BJ (cell line): ENCODE measurements at regions of chr21 and their contacts with region 1.

Region 1: DNA sequence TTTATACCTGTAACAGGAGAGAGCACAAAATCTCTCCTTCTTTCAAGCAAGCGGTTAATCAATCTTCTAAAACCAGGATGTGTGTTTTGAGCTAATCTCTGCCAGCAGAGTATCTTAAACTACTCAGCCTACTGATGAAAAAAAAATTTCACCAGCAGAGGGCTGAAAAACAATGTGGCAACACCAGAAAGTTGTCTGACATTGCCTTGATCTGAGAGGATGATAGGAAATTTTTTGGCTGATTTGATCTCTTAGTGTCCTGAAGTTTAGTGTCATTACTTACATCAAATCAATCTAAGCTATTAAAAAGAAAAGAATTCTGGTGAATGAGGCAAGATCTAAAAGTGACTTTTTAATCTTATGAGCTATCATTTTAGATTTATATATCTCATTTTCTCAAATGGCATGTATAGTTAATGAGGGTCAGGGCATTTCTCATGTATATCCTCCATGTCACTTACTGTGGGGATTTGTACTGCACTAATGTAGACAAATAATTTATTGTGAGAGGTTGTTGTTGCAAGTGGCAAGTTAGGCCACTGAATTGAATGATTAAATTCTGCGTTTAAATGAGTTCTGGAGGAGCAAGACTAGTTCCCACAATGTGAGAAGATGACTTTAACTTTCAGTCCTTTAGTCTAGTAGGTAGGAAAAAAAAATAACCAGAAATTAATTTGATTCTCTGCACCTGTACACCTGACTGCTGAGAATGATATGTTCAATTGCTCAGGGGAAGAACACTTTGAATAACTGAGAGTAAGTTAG is 10.8 kb downstream of the ADAMTS1 start:
- DNase-seq: no peak
- H3K4me3 ChIP-seq: no peak overlapping the region
- H3K27me3 ChIP-seq: no peaks in the 10 kb centered on the region
- CTCF ChIP-seq: peak; percentile 47

Region 2: DNA sequence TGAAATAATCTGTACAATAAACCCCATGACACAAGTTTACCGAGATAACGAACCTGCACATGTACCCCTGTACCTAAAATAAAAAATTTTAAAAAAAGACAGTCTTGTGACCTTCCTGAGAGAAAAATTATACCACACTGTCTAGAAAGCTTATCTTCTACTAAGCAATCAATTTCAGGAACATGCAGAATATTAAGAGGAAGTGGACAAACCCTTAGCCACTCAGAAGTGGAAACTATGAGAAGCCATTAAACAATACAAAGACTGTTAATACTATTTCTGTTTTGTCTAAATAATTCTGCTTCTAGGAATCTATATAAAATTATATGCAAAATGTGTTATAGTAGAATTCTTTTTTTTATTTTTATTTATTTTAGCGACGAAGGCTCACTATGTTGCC is 83.1 kb before region 1 on chr21:
- CTCF ChIA-PET with region 1: no interaction called
- POLR2A ChIA-PET with region 1: no interaction called
- DNase-seq: no peak
- H3K4me3 ChIP-seq: no peak overlapping the region
- H3K27me3 ChIP-seq: no peaks in the 10 kb centered on the region
- CTCF ChIP-seq: no peak

Region 3: DNA sequence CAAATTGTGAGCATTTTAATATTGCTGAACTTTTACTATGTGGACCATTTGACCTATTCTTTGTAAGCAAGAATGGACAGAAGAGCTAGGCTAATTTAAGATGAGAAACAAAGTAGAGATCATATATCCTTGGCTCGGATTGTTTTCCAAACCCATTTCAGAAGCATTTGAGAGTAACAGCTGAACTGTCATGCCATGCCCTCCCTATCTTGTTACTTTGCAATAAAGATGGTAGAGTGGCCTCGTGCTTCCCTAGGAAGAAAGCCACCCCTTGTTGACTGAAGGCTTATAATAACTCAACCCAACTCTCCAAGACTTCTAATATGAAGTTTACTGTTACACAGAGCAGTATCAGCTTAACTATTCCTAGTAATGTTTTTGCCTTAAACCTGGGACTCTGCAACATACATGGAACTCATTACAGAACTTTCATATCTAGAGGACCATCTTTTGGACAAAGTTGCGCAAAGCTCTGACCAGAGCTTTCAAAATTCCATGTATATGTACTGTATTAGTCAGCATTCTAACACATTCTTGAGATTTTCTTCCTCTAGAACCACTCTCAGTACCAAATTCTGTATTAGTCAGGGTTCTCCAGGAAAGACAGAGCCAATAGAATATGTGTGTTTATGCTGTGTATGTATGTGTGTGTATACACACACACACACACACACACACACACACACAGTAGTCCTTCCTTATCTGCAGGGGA is 57.9 kb before region 1 on chr21:
- CTCF ChIA-PET with region 1: interaction called, 10 read pairs
- POLR2A ChIA-PET with region 1: no interaction called
- DNase-seq: peak; percentile 46
- H3K4me3 ChIP-seq: no peak overlapping the region
- H3K27me3 ChIP-seq: no peaks in the 10 kb centered on the region
- CTCF ChIP-seq: no peak

Region 4: DNA sequence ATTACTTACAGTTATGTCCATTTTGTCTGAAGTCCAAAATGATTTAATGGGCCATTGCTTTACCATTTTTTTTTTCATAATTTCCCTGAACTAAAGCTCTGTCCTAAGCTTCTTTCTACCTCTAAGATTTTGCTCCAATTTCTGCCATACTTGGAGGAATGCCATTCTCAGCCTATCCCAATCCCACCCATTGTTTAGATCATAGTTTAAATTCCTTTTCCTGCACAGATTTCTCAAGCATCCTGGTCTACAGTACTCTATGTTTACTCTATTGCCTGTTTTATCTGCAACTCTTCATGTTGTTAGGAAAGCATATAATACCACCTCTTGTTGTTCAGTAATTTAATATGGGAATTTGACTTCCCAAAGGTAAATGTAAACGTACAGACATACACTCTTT is 20.0 kb before region 1 on chr21:
- CTCF ChIA-PET with region 1: interaction called, 28 read pairs
- POLR2A ChIA-PET with region 1: no interaction called
- DNase-seq: no peak
- H3K4me3 ChIP-seq: no peak overlapping the region
- H3K27me3 ChIP-seq: no peaks in the 10 kb centered on the region
- CTCF ChIP-seq: no peak

Region 5: GRCh38 chr21:27171707-27172106 is 337.3 kb after region 1 on chr21:
- CTCF ChIA-PET with region 1: no interaction called
- POLR2A ChIA-PET with region 1: no interaction called
- DNase-seq: peak; percentile 55
- H3K4me3 ChIP-seq: no peak overlapping the region
- H3K27me3 ChIP-seq: no peaks in the 10 kb centered on the region
- CTCF ChIP-seq: no peak